Lower leg skin (tissue), 4 donors: ENCODE measurements at regions of chr15 and their contacts with region 1.

Region 1: DNA sequence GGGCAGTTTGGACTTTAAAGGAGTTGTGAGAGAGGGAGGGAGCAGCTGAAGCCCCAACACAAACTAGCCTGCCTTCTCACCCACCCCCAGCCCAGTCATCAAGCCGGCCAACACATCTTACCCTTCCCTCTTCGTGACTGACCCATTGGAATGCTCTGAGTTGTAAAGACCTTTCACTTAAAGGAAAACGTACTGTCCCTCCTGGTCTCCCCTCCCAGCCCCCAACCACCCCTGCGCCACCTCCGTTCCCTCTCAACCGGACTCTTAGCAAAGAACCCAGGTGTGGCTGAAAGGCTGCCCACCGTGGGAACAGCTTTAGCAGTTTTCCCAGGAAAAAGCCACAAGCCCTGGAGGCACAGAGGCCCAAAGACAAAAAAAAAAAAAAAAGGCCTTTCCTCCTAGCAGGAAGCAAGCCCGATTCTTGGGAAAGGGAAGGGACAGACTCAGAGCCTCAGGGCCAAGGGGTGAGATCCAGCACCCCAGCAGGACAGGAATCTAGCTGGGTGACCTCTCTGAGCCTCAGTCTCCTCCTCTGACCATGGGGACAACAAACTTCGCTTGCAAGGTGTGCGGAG is 2.4 kb downstream of the CYP11A1 start:
- DNase-seq: peak in 1 of 2 donors; percentile 75
- H3K4me3 ChIP-seq: no peak overlapping the region
- CTCF ChIP-seq: no peak
- POLR2A ChIP-seq: no peak

Region 2: GRCh38 chr15:76127880-76128279 is 1762.9 kb after region 1 on chr15:
- intact Hi-C with region 1: loop called (anchors 5 kb)
- DNase-seq: no peak
- H3K4me3 ChIP-seq: no peak overlapping the region
- CTCF ChIP-seq: no peak
- POLR2A ChIP-seq: no peak